Caco-2 (cell line): ENCODE measurements at regions of chr12 and their contacts with region 1.

Region 1: GRCh38 chr12:48197971-48198671 is 5.0 kb downstream of the OR10AD1 start:
- DNase-seq: peak; percentile 93 to 95
- H3K4me3 ChIP-seq: peak overlapping the region; percentile 63
- H3K4me3 Mint-ChIP-seq: peak overlapping the region; percentile 79
- H3K27ac Mint-ChIP-seq: peak overlapping the region; percentile 83
- H3K4me1 ChIP-seq: peaks cover 72% of the 10 kb centered on the region
- H3K4me1 Mint-ChIP-seq: peaks cover 58% of the 10 kb centered on the region
- H3K27me3 ChIP-seq: no peaks in the 10 kb centered on the region
- H3K27me3 Mint-ChIP-seq: no peaks in the 10 kb centered on the region
- CTCF ChIP-seq: peak in 1 of 2 experiments; percentile 20

Region 2: GRCh38 chr12:47981496-47982260 is 216.4 kb before region 1 on chr12:
- CTCF ChIA-PET with region 1: no interaction called
- POLR2A ChIA-PET with region 1: no interaction called
- intact Hi-C with region 1: no loop called
- DNase-seq: no peak
- H3K4me3 ChIP-seq: no peak overlapping the region
- H3K4me3 Mint-ChIP-seq: no peak overlapping the region
- H3K27ac Mint-ChIP-seq: no peak overlapping the region
- H3K4me1 ChIP-seq: no peaks in the 10 kb centered on the region
- H3K4me1 Mint-ChIP-seq: no peaks in the 10 kb centered on the region
- H3K27me3 ChIP-seq: no peaks in the 10 kb centered on the region
- H3K27me3 Mint-ChIP-seq: no peaks in the 10 kb centered on the region
- CTCF ChIP-seq: no peak

Region 3: DNA sequence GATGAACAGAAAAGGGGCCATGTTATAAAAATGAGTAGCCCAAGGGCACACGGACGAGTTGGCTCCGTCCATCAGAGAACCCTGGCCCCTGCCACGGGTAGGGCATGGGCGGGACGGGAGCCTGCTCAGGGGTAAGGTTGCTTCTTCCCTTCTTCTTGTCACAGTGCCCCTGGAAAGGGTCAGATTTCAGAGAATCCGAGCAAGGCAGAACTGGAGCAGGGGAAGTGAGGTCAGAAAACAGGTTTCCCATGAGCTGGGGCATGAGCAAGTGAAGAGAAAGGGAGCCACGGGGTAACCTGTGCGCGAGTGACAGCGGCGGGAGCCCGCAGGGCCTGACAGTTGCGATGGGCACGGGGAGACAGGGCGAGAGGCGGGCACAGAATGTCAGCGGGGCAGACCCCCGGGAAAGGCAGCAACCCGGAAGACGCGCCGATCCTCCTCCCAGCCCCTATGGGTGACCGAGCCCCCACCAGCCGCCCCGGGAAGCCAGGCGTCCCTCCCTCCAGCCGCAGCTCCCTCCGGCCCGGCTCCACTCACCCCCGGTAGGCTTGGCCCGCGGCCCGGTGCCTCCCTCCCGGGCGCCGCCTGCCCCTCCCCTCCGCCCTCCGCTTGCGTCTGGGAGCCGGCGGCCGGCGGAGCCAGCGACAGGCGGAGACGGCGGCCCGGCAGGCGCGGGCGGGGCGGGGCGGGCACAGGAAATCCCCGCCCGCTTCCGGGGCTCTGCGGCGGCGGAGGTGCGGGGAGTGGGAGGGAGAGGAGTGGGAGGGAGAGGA is 152.3 kb after region 1 on chr12 and contains the start of gene ZNF641:
- CTCF ChIA-PET with region 1: no interaction called
- POLR2A ChIA-PET with region 1: no interaction called
- intact Hi-C with region 1: loop called (anchors 2 kb)
- DNase-seq: peak; percentile 87 to 91
- H3K4me3 ChIP-seq: peak within 1 kb of the TSS; percentile 94
- H3K4me3 Mint-ChIP-seq: peak within 1 kb of the TSS; percentile 91
- H3K27ac Mint-ChIP-seq: peak within 1 kb of the TSS; percentile 79
- H3K4me1 ChIP-seq: peaks cover 8% of the 10 kb centered on the region; the same call in 1 of the 2 replicates
- H3K4me1 Mint-ChIP-seq: peaks cover 15% of the 10 kb centered on the region
- H3K27me3 ChIP-seq: no peaks in the 10 kb centered on the region
- H3K27me3 Mint-ChIP-seq: no peaks in the 10 kb centered on the region
- CTCF ChIP-seq: no peak
- total RNA-seq, gene ZNF641: 13.2 and 14.7 TPM in 2 replicates